Astrocyte of the cerebellum (primary cell): ENCODE measurements at regions of chr11 and their contacts with region 1.

Region 1: DNA sequence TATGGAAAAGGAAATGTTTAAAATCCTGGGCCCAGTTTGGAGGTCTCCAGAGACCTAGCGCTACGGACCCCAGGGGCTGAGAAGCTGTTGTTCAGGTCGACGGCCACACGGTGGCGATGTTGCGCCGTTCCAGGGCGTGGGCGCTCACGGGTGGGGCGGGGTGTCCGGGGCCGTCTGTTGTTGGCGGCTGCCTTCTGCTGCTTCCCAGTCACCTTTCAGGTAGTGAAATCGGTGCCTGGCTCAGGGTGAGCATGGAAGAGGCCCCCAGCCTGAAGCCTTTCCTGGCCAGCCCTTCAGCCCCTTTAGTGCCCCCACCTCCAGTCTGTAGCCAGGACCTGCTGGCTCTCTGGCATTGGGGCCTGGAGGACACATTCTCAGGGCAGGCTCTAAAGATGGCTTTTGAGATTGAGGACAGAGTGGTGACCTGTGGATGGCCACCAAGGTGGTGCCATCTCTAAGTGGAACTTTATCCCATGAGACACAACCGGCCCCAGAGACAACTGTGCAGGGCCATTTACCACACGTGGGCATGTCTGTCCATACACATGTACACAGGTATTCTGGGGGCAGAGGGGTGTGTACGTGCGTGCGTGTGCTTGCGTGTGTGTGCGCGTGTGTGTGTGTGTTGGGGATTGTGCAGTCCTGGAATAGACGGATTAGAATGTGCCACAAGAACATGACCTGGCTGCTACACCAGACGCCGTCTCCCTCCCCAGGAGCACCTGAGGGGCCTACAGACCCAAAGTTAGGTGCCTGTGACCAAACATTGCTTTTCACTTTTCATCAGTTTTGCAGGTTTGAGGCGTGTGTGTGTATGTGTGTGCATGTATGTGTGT is 53.8 kb downstream of the ST14 start:
- DNase-seq: no peak
- H3K4me3 ChIP-seq: no peak overlapping the region
- CTCF ChIP-seq: peak; percentile 79

Region 2: GRCh38 chr11:130390071-130390758 is 176.9 kb after region 1 on chr11:
- in situ Hi-C with region 1: loop called (anchors 25 kb)
- DNase-seq: peak; percentile 57
- H3K4me3 ChIP-seq: no peak overlapping the region
- CTCF ChIP-seq: peak; percentile 71

Region 3: GRCh38 chr11:130894322-130895025 is 681.1 kb after region 1 on chr11:
- in situ Hi-C with region 1: loop called (anchors 25 kb)
- DNase-seq: peak; percentile 60
- H3K4me3 ChIP-seq: no peak overlapping the region
- CTCF ChIP-seq: peak; percentile 88